Endothelial cell of umbilical vein (primary cell): ENCODE measurements at regions of chr4 and their contacts with region 1.

Region 1: GRCh38 chr4:2008875-2009703 is at the start of gene NELFA:
- DNase-seq: peak; percentile 92
- H3K4me3 ChIP-seq: peak within 1 kb of the TSS; percentile 69 to 96 (median 69)
- H3K27ac ChIP-seq: peak within 1 kb of the TSS; percentile 88
- H3K4me1 ChIP-seq: peaks cover 16% of the 10 kb centered on the region
- H3K27me3 ChIP-seq: no peaks in the 10 kb centered on the region
- CTCF ChIP-seq: peak; percentile 30 to 61
- POLR2A ChIP-seq: peak; percentile 82
- total RNA-seq, gene NELFA: 27.3 and 30.3 TPM in 2 replicates

Region 2: DNA sequence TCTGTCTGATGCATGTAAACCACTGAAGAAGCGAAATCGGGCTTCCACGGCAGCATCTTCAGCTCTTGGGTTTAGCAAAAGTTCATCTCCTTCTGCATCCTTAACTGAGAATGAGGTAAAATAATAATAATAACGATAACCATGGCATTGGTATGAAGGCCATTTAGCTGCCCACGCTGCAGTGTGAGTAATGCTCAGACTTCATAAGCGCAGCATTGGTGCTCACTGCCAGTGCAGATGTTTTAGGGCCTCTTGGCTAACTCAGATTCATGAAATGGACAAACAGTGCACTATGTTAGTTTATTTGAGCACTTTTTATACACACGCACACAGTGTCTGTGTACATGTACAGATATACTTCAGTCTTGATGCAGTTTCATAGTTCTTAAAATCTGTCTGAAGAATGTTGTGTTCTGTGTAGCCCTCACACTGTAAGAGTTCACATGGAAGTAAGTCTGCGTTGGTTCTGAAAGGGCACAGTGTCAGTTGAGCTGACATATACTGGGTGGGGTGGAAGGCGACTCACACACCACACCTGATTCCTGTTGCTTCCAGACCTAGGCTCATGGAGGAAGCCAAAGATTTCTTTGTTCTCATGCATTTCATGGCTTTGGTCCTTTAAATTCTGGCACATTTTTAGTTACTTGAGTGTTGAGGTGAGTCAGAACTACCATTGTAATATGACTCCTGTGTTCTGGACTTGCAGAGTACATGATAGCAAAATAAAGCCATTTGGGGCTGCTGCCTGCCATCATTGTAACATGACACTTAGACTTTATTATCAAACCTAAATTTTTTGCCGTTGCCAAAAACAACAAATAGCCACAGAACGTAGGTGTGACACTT is 69.2 kb before region 1 on chr4:
- CTCF ChIA-PET with region 1: interaction called, 3 read pairs
- POLR2A ChIA-PET with region 1: no interaction called
- dilution Hi-C with region 1: no loop called
- intact Hi-C with region 1: loop called (anchors 2 kb)
- DNase-seq: peak; percentile 83
- H3K4me3 ChIP-seq: no peak overlapping the region
- H3K27ac ChIP-seq: peak overlapping the region; percentile 38
- H3K4me1 ChIP-seq: peaks cover 17% of the 10 kb centered on the region
- H3K27me3 ChIP-seq: no peaks in the 10 kb centered on the region
- CTCF ChIP-seq: no peak
- POLR2A ChIP-seq: no peak

Region 3: DNA sequence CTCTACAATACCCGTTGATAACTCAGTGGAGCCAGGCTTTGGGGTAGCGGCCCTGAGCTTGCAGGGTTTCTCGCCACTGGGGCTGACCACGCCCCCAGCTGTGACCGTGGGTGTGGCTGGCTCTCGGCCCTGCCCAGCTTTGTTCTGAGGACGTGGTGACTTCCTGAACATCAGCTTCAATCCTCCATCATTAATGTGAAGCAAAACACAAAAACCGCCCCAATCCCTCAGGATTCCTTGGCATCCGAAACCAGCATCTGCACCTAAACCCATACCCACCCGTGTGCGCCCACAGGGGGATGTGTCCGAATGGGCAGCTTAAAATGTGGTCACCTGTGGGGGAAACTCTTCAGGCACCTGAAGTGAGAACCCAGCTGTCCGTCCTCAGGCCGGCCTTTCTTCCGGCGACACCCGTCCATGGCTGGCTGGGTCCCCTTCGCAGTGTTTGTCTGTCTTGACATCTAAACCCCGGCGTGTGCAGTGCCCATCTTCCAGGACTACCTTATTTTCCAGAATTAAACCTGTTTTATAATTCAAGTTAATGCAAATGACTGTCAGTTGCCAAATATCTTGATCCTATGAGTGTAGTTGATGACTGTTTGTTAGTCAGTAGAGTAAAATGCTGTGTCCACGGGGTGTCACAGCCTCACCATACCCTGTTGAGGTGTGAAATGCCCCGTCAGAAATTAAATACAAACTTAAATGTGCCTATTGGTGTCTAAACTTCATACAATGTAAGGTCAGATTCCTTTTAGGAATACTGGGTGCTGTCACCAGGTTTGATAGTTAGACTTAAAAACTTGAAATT is 27.6 kb before region 1 on chr4:
- CTCF ChIA-PET with region 1: no interaction called
- POLR2A ChIA-PET with region 1: no interaction called
- dilution Hi-C with region 1: no loop called
- intact Hi-C with region 1: no loop called
- DNase-seq: no peak
- H3K4me3 ChIP-seq: no peak overlapping the region
- H3K27ac ChIP-seq: no peak overlapping the region
- H3K4me1 ChIP-seq: no peaks in the 10 kb centered on the region
- H3K27me3 ChIP-seq: no peaks in the 10 kb centered on the region
- CTCF ChIP-seq: no peak
- POLR2A ChIP-seq: no peak

Region 4: DNA sequence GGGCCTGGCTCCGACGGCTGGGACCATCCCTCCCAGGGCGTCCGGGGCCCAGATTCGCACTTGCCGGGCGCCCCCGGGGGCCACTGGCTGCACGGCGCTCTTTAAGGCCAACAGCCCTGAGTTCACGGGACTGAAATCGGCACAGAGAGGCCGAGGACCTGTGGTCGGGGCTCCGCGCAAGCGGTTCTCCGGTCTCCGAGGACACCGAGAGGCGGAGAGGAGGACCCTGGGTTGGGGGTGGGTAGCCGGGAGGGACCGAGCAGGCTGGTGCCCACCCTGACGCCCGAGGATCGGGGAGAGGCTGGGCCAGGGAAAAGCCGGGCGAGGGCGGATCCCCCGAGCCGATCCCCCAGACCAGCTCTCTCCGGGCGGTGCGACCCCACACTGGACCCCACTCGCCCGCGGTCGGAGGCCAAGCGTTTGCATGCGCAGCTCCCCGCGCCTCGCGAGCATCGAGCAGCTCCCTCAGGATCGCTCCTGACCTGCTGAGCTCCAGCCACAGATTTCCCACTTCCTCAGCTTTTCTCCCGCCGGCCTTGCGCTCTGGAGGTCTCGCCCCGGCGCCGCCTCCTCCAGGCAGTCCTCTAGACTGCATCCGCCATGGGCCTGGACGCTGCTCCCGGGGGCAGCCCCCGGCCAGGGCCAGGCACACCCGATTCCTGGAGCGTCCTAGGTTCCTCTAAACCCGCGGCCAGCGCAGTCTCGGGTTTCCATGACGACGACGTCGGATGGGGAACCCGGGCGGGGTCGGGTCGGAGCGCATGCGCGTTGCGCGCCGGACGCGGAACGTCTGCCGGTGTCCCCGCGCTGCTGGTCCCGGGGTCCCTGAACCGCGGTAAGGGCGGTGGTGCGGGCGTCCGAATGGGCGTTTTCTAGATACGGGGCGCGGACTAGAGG is 32.4 kb after region 1 on chr4:
- CTCF ChIA-PET with region 1: interaction called, 5 read pairs
- POLR2A ChIA-PET with region 1: no interaction called
- dilution Hi-C with region 1: no loop called
- intact Hi-C with region 1: loop called (anchors 2 kb)
- DNase-seq: peak; percentile 66
- H3K4me3 ChIP-seq: peak overlapping the region; percentile 17 to 93 (median 25)
- H3K27ac ChIP-seq: no peak overlapping the region
- H3K4me1 ChIP-seq: no peaks in the 10 kb centered on the region
- H3K27me3 ChIP-seq: peaks cover 6 to 9% of the 10 kb centered on the region in 2 experiments
- CTCF ChIP-seq: no peak
- POLR2A ChIP-seq: peak; percentile 66

Region 5: GRCh38 chr4:2154215-2154740 is 145.2 kb after region 1 on chr4:
- CTCF ChIA-PET with region 1: no interaction called
- POLR2A ChIA-PET with region 1: no interaction called
- dilution Hi-C with region 1: no loop called
- intact Hi-C with region 1: no loop called
- DNase-seq: no peak
- H3K4me3 ChIP-seq: no peak overlapping the region
- H3K27ac ChIP-seq: no peak overlapping the region
- H3K4me1 ChIP-seq: no peaks in the 10 kb centered on the region
- H3K27me3 ChIP-seq: no peaks in the 10 kb centered on the region
- CTCF ChIP-seq: no peak
- POLR2A ChIP-seq: no peak

Region 6: DNA sequence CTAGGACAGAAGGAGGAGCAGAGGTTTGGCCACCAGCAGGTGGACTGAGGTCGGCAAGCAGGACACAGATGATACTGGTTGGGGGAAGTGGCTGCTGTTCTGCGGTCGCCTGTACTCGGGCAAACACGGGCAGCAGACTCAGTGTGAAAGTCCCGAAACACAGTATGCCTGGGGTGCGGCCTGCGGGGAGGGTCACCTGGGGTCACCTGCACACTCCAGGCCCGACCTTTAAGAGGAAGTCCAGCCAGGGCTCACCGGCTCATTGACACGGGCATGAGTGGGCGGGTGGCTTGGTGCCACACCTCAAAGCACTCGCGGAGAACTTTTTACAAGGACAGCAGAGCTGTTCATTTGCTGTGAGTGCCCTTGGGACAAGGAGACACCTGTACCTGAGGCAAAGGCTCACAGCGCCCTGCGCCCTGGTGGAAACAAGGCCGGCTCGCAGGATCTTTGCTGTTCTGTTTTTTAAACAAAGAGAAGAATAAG is 324.3 kb after region 1 on chr4:
- CTCF ChIA-PET with region 1: no interaction called
- POLR2A ChIA-PET with region 1: no interaction called
- dilution Hi-C with region 1: no loop called
- intact Hi-C with region 1: no loop called
- DNase-seq: no peak
- H3K4me3 ChIP-seq: no peak overlapping the region
- H3K27ac ChIP-seq: no peak overlapping the region
- H3K4me1 ChIP-seq: peaks cover 13% of the 10 kb centered on the region
- H3K27me3 ChIP-seq: no peaks in the 10 kb centered on the region
- CTCF ChIP-seq: no peak
- POLR2A ChIP-seq: no peak